OCI-LY7 (cell line): ENCODE measurements at regions of chr2 and their contacts with region 1.

Region 1: DNA sequence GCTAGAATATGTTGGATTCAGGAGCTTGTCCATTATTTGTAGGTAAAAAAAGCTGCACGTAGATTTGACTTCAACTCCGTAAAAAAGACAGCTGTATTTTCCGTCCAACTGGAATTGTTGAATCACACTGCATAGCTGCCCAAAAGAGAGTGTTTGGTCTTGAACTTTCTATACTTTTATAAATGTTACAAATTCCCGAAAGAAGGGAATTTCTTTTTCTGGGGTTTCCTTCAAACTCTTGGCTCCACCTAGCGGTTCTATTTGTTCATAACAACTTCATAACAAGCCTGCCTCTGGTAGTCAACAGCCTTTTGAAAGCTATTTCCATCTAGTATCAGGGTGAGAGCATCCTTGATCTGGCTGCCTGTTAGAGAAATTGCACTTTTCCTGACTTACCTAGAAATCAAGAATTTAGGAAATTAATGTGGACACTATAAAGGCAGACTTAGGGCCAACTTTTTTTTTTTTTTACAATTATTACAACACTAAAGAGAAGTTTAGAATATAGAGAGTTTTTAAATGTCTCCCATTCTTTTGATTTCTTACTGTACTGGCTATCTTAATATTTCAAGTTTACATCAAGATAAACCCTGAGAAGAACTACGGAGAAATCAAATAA is 48.1 kb downstream of the TMEM185B start:
- DNase-seq: peak; percentile 78
- H3K4me3 ChIP-seq: no peak overlapping the region
- H3K27ac ChIP-seq: peak overlapping the region; percentile 30
- H3K4me1 ChIP-seq: peaks cover 48% of the 10 kb centered on the region
- CTCF ChIP-seq: peak; percentile 98

Region 2: GRCh38 chr2:119641562-119642258 is 533.4 kb before region 1 on chr2:
- CTCF ChIA-PET with region 1: no interaction called
- POLR2A ChIA-PET with region 1: interaction called, 4 read pairs
- intact Hi-C with region 1: loop called (anchors 2 kb)
- DNase-seq: peak; percentile 81
- H3K4me3 ChIP-seq: no peak overlapping the region
- H3K27ac ChIP-seq: no peak overlapping the region
- H3K4me1 ChIP-seq: peaks cover 4% of the 10 kb centered on the region
- CTCF ChIP-seq: peak; percentile 96

Region 3: DNA sequence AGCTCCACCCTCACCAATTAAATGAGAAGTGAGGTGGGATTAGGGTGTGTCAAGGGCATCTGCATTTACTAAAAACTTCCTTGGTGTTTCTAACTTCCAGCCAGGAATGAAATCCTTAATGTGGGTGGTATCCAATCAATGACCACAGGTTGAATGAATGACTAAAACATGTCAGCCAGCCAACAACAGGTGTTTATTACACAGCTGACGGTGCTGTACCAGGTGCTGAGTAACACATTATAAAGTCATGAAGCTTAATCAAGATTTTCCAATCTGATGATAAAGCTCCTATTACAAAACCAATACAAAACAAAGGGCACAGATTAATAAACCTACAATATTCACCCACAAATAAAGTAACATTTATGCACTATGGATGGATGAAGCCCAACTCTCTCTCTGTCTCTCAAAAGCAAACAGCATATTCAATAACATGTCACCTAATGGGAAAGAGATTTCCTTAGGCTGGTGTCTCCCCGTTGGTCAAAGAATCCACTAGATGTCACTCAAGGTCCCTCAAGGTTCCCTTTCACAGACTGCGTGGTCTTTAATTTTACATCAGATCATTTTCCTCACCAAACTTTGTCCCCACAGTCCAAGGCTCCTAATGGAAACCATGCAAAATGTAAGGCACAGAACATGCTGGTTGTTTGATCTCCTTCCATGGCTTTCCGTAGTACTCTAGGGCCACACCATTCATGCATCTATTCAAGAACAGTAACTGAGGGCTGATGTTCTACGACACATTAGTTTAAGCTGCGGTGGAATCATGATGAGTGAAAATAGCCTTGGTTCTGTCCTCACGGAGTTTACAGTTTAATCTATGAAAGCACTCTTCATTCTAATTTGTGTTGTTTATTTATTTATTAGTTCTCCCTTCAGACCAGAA is 421.8 kb before region 1 on chr2:
- CTCF ChIA-PET with region 1: interaction called, 6 read pairs
- POLR2A ChIA-PET with region 1: interaction called, 23 read pairs
- intact Hi-C with region 1: loop called (anchors 1 kb)
- DNase-seq: peak; percentile 65
- H3K4me3 ChIP-seq: no peak overlapping the region
- H3K27ac ChIP-seq: no peak overlapping the region
- H3K4me1 ChIP-seq: no peaks in the 10 kb centered on the region
- CTCF ChIP-seq: peak; percentile 89

Region 4: DNA sequence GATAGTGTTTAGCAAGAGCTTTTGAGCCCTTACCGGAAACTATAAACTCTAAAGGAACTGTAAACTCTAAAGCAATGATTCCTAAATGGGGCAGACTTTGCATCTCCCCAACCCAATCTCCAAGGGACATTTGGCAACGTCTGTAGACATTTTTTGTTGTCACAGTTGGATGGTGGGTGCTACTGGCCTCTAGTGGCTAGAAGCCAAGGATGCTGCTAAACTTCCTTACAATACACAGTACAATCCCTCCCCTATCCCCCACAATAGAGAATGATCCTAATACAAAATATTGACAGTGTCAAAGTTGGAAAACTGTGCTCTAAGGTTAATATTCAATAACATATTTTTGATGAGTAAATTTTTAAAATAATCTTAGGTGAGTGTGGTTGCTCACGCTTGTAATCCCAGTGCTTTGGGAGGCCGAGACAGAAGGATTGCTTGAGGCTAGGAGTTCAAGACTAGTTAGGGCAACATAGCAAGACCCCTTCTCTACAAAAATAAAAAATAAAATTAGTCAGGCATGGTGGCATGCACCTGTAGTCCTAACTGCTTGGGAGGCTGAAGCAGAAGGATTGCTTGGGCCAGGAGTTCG is 348.6 kb before region 1 on chr2:
- CTCF ChIA-PET with region 1: no interaction called
- POLR2A ChIA-PET with region 1: no interaction called
- intact Hi-C with region 1: loop called (anchors 5 kb)
- DNase-seq: peak; percentile 51
- H3K4me3 ChIP-seq: no peak overlapping the region
- H3K27ac ChIP-seq: no peak overlapping the region
- H3K4me1 ChIP-seq: no peaks in the 10 kb centered on the region
- CTCF ChIP-seq: peak; percentile 85

Region 5: GRCh38 chr2:120012771-120013596 is 162.1 kb before region 1 on chr2 and contains the start of gene EPB41L5:
- CTCF ChIA-PET with region 1: interaction called, 3 read pairs
- POLR2A ChIA-PET with region 1: interaction called, 7 read pairs
- intact Hi-C with region 1: loop called (anchors 1 kb)
- DNase-seq: peak; percentile 96
- H3K4me3 ChIP-seq: peak within 1 kb of the TSS; percentile 82
- H3K27ac ChIP-seq: peak within 1 kb of the TSS; percentile 7
- H3K4me1 ChIP-seq: peaks cover 23% of the 10 kb centered on the region
- CTCF ChIP-seq: no peak
- total RNA-seq, gene EPB41L5: 5.6 and 7.0 TPM in 2 replicates

Region 6: DNA sequence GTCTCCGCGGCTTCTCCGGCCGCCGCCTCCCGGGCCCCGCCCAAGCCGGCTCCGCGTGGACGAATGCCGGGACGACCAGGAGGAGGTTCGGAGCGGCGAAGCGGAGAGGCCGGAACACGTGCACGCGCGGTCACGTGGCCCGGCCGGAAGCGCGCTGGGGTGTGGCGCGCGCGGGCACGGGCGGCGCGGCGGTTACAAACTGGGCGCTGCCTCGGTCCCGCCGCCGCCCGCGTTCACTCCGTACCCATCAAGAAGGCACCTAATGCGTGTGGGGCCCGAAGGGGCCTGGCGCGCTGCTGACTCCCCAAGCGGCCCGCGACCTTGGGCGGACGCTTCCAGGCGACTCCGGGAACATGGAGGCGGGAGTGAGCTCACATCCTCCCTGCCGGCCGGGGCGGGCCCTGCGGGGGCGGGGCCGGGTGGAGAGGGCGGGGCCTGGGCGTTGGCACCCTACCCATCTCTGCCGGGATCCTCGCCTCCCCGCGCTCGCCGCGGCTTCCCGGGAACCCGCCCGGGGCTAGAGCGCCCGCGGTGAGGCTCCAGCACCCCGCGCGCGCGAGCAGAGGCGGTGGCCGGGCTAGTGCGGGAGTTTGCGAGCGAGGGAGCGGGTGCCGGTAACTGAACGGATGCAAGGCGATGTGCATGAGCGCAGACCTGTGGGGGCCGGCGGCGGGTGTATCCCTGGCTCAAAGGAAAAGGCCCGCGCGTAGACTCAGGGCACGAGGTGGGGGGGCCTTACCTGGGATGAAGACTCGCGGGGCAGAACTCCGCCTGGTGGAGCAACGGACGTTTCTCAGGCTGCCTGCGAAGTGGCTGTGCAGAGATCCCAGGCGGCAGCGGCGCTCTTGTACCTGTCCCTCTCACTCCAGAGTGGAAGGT is 48.2 kb after region 1 on chr2 and contains the start of gene TMEM185B:
- CTCF ChIA-PET with region 1: interaction called, 3 read pairs
- POLR2A ChIA-PET with region 1: interaction called, 12 read pairs
- intact Hi-C with region 1: loop called (anchors 1 kb)
- DNase-seq: peak; percentile 90
- H3K4me3 ChIP-seq: peak within 1 kb of the TSS; percentile 76
- H3K27ac ChIP-seq: peak within 1 kb of the TSS; percentile 78
- H3K4me1 ChIP-seq: peaks cover 55% of the 10 kb centered on the region
- CTCF ChIP-seq: peak; percentile 40; the same call in 1 of the 2 replicates
- total RNA-seq, gene TMEM185B: 28.7 and 30.2 TPM in 2 replicates

Region 7: GRCh38 chr2:120802158-120802557 is 627.1 kb after region 1 on chr2:
- CTCF ChIA-PET with region 1: no interaction called
- POLR2A ChIA-PET with region 1: no interaction called
- intact Hi-C with region 1: no loop called
- DNase-seq: no peak
- H3K4me3 ChIP-seq: no peak overlapping the region
- H3K27ac ChIP-seq: no peak overlapping the region
- H3K4me1 ChIP-seq: no peaks in the 10 kb centered on the region
- CTCF ChIP-seq: no peak